IMR-90 (cell line): ENCODE measurements at regions of chr6 and their contacts with region 1.

Region 1: GRCh38 chr6:74091136-74091793 is 395.3 kb downstream of the CD109 start:
- DNase-seq: peak; percentile 58
- ATAC-seq: peak; percentile 76
- H3K4me3 ChIP-seq: no peak overlapping the region
- H3K27ac ChIP-seq: no peak overlapping the region; the same call in 1 of the 2 replicates
- H3K4me1 ChIP-seq: peaks cover 4% of the 10 kb centered on the region
- H3K27me3 ChIP-seq: no peaks in the 10 kb centered on the region
- CTCF ChIP-seq: peak; percentile 62
- POLR2A ChIP-seq: no peak
- RAD21 ChIP-seq: peak; percentile 62

Region 2: GRCh38 chr6:73739096-73739495 is 352.2 kb before region 1 on chr6:
- CTCF ChIA-PET with region 1: no interaction called
- POLR2A ChIA-PET with region 1: no interaction called
- dilution Hi-C with region 1: no loop called
- in situ Hi-C with region 1: loop called (anchors 10 kb)
- intact Hi-C with region 1: loop called (anchors 1 kb)
- DNase-seq: peak; percentile 78
- ATAC-seq: peak; percentile 78
- H3K4me3 ChIP-seq: no peak overlapping the region
- H3K27ac ChIP-seq: no peak overlapping the region
- H3K4me1 ChIP-seq: peaks cover 2% of the 10 kb centered on the region; the same call in 1 of the 2 replicates
- H3K27me3 ChIP-seq: no peaks in the 10 kb centered on the region
- CTCF ChIP-seq: peak; percentile 86
- POLR2A ChIP-seq: no peak
- RAD21 ChIP-seq: peak; percentile 92

Region 3: GRCh38 chr6:73854998-73855718 is 236.1 kb before region 1 on chr6:
- CTCF ChIA-PET with region 1: no interaction called
- POLR2A ChIA-PET with region 1: no interaction called
- dilution Hi-C with region 1: no loop called
- in situ Hi-C with region 1: no loop called
- intact Hi-C with region 1: loop called (anchors 1 kb)
- DNase-seq: peak; percentile 73
- ATAC-seq: peak; percentile 53; the same call in 1 of the 2 replicates
- H3K4me3 ChIP-seq: no peak overlapping the region
- H3K27ac ChIP-seq: no peak overlapping the region
- H3K4me1 ChIP-seq: peaks cover 4% of the 10 kb centered on the region
- H3K27me3 ChIP-seq: no peaks in the 10 kb centered on the region
- CTCF ChIP-seq: peak; percentile 86
- POLR2A ChIP-seq: no peak
- RAD21 ChIP-seq: peak; percentile 78

Region 4: GRCh38 chr6:74170118-74170517 is 78.9 kb after region 1 on chr6:
- CTCF ChIA-PET with region 1: interaction called, 11 read pairs
- POLR2A ChIA-PET with region 1: interaction called, 3 read pairs
- dilution Hi-C with region 1: no loop called
- in situ Hi-C with region 1: no loop called
- intact Hi-C with region 1: loop called (anchors 2 kb)
- DNase-seq: peak; percentile 99
- ATAC-seq: peak; percentile 92
- H3K4me3 ChIP-seq: no peak overlapping the region
- H3K27ac ChIP-seq: peak overlapping the region; percentile 99; the same call in 1 of the 2 replicates
- H3K4me1 ChIP-seq: peaks cover 8% of the 10 kb centered on the region; the same call in 1 of the 2 replicates
- H3K27me3 ChIP-seq: no peaks in the 10 kb centered on the region
- CTCF ChIP-seq: no peak
- POLR2A ChIP-seq: no peak
- RAD21 ChIP-seq: no peak

Region 5: DNA sequence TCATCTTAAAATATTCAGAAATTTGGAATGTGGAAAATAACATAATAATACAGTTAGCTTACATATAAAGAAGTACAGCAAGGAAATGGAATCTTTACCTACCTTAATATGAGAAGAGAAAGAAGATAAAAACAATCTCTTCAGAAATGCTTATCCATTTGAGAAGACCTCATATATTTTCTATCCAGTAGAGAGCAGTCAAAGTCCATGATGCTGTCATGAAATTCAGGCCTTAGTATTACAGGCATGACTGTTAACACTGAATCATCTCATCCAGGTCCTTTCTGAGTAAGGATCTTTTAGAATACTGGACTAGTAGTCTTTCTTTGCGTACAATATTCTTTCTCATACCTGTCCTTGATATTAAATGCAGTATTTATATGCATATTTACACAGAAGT is 318.2 kb after region 1 on chr6:
- CTCF ChIA-PET with region 1: interaction called, 9 read pairs
- POLR2A ChIA-PET with region 1: no interaction called
- dilution Hi-C with region 1: no loop called
- in situ Hi-C with region 1: loop called (anchors 10 kb)
- intact Hi-C with region 1: loop called (anchors 1 kb)
- DNase-seq: peak; percentile 87
- ATAC-seq: peak; percentile 99
- H3K4me3 ChIP-seq: no peak overlapping the region
- H3K27ac ChIP-seq: no peak overlapping the region
- H3K4me1 ChIP-seq: peaks cover 2% of the 10 kb centered on the region
- H3K27me3 ChIP-seq: no peaks in the 10 kb centered on the region
- CTCF ChIP-seq: peak; percentile 84
- POLR2A ChIP-seq: no peak
- RAD21 ChIP-seq: peak; percentile 97

Region 6: GRCh38 chr6:74891349-74891831 is 800.1 kb after region 1 on chr6:
- CTCF ChIA-PET with region 1: no interaction called
- POLR2A ChIA-PET with region 1: no interaction called
- dilution Hi-C with region 1: no loop called
- in situ Hi-C with region 1: no loop called
- intact Hi-C with region 1: loop called (anchors 2 kb)
- DNase-seq: peak; percentile 83
- ATAC-seq: peak; percentile 85
- H3K4me3 ChIP-seq: no peak overlapping the region
- H3K27ac ChIP-seq: no peak overlapping the region
- H3K4me1 ChIP-seq: peaks cover 2% of the 10 kb centered on the region; the same call in 1 of the 2 replicates
- H3K27me3 ChIP-seq: no peaks in the 10 kb centered on the region
- CTCF ChIP-seq: no peak
- POLR2A ChIP-seq: no peak
- RAD21 ChIP-seq: no peak